ENCODE measurements at regions of chr1 and their contacts with region 1.

Region 1: GRCh38 chr1:203038891-203039608 is 12.8 kb downstream of the PPFIA4 start:
- DNase-seq: peak; percentile 82
- ATAC-seq: peak; percentile 85 to 86

Region 2: DNA sequence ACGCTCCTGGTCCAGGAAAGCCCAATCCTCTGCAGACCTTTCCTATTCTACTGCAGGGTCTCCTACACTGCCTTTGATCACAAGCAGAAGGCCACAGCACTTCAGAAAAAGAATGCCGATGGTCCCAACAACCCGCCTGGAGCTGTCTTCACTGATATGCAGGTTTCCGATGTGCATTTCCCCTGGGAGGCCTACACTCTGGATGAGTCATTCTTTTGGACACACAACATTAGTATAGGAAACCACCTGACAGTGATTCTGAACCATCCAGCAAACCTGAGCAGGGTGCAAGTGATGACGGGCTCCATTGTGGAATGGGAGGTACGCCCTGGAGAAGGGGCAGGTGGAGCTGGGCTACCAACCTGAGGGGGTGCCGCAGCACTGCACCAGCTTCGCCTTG is 213.3 kb before region 1 on chr1:
- intact Hi-C with region 1: no loop called
- DNase-seq: no peak
- ATAC-seq: no peak

Region 3: GRCh38 chr1:202848191-202848542 is 190.9 kb before region 1 on chr1:
- intact Hi-C with region 1: no loop called
- DNase-seq: no peak
- ATAC-seq: no peak

Region 4: GRCh38 chr1:202982715-202983430 is 56.2 kb before region 1 on chr1:
- intact Hi-C with region 1: no loop called
- DNase-seq: no peak
- ATAC-seq: no peak

Region 5: GRCh38 chr1:203084588-203085502 is 45.8 kb after region 1 on chr1:
- intact Hi-C with region 1: no loop called
- DNase-seq: no peak
- ATAC-seq: no peak

Region 6: DNA sequence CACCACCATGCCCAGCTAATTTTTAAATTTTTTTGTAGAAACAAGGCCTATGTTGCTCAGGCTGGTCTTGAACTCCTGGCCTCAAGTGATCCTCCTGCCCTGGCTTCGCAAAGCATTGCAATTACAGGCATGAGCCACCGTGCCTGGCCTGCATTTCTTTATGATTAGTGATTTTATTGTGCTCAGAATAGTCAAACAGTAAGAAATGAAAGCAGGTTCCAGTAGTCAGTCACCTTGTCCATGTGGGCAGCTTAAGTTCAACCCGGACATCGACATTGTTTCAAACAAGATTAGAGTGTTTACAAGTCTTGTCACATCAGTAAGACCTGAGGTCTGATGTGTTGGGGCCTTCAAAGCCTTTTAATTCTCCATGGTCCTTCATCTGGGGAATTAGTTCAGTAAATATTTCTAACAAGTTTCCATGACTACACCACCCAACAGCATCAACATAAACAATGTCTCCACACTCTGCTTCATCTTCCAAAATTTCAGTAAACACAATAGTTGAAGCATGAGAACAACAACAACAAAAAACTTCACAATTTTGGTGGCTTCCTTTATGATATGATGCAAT is 73.3 kb after region 1 on chr1:
- intact Hi-C with region 1: loop called in 1 of 2 experiments (anchors 5 kb)
- DNase-seq: no peak
- ATAC-seq: no peak

Region 7: DNA sequence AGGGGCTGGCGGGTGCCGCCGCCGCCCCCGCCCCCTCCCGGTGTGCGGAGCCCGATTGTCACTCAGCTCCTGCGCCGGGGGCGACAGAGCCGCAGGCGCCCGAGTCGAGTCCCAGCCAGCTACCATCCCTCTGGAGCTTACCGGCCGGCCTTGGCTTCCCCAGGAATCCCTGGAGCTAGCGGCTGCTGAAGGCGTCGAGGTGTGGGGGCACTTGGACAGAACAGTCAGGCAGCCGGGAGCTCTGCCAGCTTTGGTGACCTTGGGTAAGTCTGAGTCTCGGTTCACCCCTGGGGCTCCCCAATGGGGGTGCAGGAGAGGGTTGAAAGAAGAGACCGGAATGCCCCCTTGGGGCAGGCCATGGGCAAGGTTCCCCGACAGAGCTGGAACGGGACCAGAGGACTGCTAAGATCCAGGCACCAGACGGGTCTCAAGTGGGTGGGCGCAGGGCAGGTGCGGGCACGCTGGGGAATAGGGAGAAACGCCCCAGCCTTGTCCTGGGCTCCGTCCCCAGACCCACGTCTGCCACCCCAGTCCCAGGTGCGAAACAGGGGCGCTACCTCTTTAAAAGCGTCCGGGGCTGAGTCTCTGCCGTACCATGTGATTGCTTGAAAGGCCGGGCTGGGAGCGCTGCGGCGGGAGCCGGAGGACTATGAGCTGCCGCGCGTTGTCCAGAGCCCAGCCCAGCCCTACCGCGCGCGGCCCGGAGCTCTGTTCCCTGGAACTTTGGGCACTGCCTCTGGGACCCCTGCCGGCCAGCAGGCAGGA is 88.8 kb after region 1 on chr1 and contains the start of gene ADORA1:
- intact Hi-C with region 1: loop called in 1 of 2 experiments (anchors 5 kb)
- DNase-seq: peak; percentile 72
- ATAC-seq: peak; percentile 79 to 87
- total RNA-seq, gene ADORA1: 19.9 to 27.9 TPM

Region 8: DNA sequence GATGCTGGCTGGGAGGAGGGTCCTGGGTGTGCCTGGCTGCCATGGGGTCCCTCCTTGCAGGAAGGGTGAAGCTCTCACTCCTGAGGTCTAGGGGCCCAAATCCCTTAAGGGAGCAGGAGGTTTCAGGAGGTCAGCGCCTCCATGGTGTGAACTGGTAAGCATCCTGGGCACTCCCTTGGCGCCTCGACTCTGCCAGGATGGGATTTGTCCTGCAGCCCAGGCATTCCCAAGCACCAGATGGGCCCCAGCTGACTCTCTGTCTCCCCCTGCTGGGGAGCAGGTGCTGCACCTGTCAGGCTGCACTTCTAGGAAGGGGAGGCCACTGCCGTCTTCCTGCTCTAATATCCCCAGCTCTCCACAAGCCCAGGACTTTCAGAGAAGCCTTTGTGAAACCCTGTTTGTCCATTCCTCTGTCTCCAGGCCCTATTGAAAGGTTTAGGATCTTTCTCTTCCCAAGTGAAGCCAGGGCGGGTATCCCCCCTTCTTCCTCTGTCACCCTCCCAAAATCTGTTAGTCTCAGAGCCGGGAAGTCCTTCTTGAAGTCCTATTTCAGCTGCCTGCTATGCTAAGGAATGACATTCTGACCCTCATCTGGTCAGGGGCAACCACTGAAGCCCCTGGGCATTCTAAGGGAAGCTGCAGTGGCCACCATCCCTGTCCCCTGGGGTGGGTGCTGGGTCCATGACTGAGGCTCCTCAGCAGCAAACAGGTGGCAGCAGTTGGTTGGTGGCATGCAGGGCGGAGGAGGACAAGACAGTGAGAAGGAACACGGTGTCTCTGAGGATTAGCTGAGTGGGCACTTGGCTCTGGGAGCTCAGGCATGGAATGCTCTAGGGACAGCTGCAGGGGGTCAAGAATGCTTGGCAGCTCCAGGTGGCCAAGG is 133.3 kb after region 1 on chr1:
- intact Hi-C with region 1: loop called in 1 of 2 experiments (anchors 5 kb)
- DNase-seq: peak; percentile 63
- ATAC-seq: peak; percentile 62 to 64

Region 9: GRCh38 chr1:203216274-203217138 is 177.5 kb after region 1 on chr1:
- intact Hi-C with region 1: loop called (anchors 1 to 5 kb)
- DNase-seq: peak; percentile 42
- ATAC-seq: peak; percentile 81 to 82